MCF 10A (cell line): ENCODE measurements at regions of chr19 and their contacts with region 1.

Region 1: GRCh38 chr19:49200238-49200862 is 42.8 kb downstream of the TRPM4 start:
- DNase-seq: peak; percentile 24
- H3K4me3 Mint-ChIP-seq: no peak overlapping the region
- H3K27ac Mint-ChIP-seq: no peak overlapping the region
- H3K4me1 Mint-ChIP-seq: no peaks in the 10 kb centered on the region
- H3K27me3 Mint-ChIP-seq: no peaks in the 10 kb centered on the region
- CTCF ChIP-seq: no peak

Region 2: DNA sequence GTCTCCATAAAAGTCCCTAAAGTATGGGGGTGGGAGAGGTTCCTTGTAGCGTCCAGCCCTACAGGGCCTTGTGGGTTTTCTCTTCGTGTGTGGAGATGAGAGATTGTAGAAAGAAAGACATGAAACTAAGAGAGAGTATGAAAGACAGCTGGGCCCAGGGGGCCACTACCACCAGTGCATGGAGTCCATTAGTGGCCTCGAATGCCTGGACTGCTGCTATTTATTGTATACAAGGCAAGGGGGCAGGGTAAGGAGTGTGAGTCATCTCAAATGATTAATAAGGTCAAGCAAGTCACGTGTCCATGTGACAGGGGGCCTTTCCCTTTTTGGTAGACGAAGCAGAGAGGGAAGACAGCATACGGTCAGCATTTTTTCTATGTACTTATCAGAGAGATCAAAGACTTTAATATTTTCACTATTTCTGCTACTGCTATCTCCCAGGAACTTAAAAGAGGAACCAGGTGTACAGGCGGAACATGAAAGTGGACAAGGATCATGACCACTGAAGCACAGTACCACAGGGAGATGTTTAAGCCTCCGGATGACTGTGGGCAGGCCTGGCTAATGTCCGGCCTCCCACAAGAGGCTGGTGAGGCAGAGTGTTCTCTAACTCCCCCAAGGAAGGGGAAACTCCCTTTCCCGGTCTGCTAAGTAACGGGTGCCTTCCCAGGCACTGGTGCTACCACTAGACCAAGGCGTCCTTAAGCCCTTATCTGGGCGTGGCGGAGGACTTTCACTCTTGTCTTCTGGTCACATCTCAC is 419.5 kb before region 1 on chr19:
- CTCF ChIA-PET with region 1: no interaction called
- POLR2A ChIA-PET with region 1: no interaction called
- intact Hi-C with region 1: loop called (anchors 10 kb)
- DNase-seq: peak; percentile 46
- H3K4me3 Mint-ChIP-seq: no peak overlapping the region
- H3K27ac Mint-ChIP-seq: peak overlapping the region; percentile 11
- H3K4me1 Mint-ChIP-seq: peaks cover 8% of the 10 kb centered on the region
- H3K27me3 Mint-ChIP-seq: no peaks in the 10 kb centered on the region
- CTCF ChIP-seq: no peak

Region 3: DNA sequence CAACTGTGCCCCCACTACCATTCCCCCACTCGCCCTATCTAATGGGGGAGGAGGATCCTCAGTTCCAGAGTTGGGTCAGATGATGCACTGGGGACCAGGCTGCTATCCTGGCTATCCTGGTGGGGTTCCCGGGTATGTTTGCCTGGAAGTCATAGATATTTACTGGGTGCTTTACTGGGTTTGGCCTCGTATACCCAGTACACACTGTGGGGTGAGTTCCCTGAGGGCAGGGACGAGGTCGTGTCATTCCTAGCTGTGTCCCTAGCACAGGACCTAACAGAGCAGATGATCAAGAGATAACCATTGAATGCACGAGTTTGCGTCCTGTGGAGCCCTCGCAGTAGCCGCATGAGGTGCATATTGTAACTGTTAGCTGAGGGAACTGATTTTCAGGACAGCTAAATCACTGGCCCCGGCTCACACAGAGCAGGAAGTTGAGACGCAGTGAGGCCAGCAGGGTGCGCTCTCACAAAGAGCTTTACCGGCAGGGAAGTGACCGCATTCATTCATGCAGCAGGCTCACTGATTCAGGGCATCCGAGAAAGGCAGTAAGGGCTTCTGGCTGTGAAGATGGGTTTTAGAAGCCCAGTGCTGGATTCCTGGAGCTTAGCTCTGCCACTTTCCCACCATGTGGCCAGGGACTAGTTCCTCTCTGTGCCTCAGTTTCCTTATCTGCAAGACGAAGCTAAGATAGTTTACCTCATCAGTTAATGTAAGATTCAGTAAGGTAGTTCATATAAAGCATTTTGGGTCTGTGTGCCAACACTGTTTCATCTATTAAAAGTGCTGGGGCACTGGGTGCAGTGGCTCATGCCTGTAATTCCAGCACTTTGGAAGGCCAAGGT is 200.6 kb before region 1 on chr19:
- CTCF ChIA-PET with region 1: interaction called, 13 read pairs
- POLR2A ChIA-PET with region 1: no interaction called
- intact Hi-C with region 1: loop called (anchors 5 kb)
- DNase-seq: peak; percentile 69
- H3K4me3 Mint-ChIP-seq: no peak overlapping the region
- H3K27ac Mint-ChIP-seq: no peak overlapping the region
- H3K4me1 Mint-ChIP-seq: peaks cover 9% of the 10 kb centered on the region
- H3K27me3 Mint-ChIP-seq: no peaks in the 10 kb centered on the region
- CTCF ChIP-seq: peak; percentile 81

Region 4: GRCh38 chr19:49097455-49098288 is 102.7 kb before region 1 on chr19:
- CTCF ChIA-PET with region 1: interaction called, 25 read pairs
- POLR2A ChIA-PET with region 1: interaction called, 6 read pairs
- intact Hi-C with region 1: loop called (anchors 1 kb)
- DNase-seq: peak; percentile 87
- H3K4me3 Mint-ChIP-seq: no peak overlapping the region
- H3K27ac Mint-ChIP-seq: no peak overlapping the region
- H3K4me1 Mint-ChIP-seq: peaks cover 5% of the 10 kb centered on the region
- H3K27me3 Mint-ChIP-seq: no peaks in the 10 kb centered on the region
- CTCF ChIP-seq: peak; percentile 96

Region 5: DNA sequence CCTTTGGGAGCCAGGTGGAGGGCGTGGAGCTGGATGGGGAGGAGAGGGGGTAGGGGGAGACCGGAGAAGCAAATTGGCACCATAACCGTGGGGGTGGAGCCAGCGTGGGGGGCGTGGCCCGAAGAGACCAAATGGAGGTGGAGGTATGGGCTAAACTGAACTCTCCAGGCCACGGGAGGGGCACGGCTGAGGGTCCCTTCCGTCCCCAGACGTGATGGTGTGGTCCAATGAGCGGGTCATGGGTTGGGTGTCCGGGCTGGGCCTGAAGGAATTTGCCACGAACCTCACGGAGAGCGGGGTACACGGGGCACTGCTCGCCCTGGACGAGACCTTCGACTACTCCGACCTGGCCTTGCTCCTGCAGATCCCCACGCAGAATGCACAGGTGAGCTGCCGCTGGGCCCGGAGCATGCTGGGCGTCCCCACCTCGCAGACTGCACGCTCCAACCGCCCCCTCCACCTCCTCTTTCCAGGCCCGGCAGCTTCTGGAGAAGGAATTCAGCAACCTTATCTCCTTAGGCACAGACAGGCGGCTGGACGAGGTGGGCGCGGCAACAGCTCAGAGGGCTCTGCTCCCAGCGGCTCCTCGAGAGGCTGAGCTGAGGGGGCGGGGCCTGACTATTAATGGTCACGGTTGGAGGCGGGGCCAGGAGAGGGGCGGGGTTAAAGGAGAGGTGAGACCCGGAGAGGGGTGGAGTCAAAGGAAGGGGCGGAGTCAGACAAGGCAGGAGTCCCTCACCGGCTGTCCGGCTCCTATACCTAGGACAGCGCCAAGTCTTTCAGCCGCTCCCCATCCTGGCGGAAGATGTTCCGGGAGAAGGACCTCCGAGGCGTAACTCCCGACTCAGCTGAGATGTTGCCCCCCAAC is 51.3 kb before region 1 on chr19:
- CTCF ChIA-PET with region 1: interaction called, 14 read pairs
- POLR2A ChIA-PET with region 1: interaction called, 6 read pairs
- intact Hi-C with region 1: loop called (anchors 1 kb)
- DNase-seq: peak; percentile 98
- H3K4me3 Mint-ChIP-seq: peak overlapping the region; percentile 82
- H3K27ac Mint-ChIP-seq: peak overlapping the region; percentile 52
- H3K4me1 Mint-ChIP-seq: peaks cover 17% of the 10 kb centered on the region
- H3K27me3 Mint-ChIP-seq: no peaks in the 10 kb centered on the region
- CTCF ChIP-seq: no peak

Region 6: DNA sequence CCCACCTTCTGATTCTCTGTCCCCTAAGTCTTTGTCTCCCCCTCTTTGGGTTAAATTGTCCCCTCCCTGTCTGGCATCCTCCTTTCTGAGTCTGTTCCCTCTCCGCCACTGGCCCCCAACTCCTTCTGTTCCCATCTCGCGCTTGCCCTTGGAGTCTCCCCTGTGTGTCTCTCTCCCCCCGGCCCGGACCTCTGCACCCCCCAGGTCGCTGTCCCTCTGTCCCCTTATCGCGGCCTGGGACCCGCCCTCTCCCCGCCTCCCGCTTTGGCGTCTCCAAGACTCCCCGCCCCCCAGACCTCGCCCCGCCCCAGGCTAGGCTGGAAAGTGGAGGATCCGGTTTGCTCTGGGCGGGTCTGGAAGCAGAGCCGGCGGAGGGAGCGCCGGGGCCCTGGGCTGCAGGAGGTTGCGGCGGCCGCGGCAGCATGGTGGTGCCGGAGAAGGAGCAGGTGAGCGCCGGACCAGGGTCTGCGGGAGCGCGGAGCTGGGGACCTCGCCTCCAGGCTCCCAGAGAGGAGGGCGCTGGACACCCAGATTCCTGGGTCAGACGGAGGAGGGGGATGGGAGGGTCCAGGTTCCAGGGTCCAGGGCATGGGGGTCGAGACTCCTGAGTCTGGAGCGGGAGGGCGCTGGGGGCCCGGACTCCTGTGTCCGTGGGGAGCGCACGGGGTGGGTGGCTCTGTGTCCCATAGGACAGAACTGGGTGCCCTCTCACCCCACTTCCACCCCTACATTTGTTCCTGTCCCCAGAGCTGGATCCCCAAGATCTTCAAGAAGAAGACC is 42.7 kb before region 1 on chr19 and contains the start of gene TRPM4:
- CTCF ChIA-PET with region 1: interaction called, 7 read pairs
- POLR2A ChIA-PET with region 1: interaction called, 4 read pairs
- intact Hi-C with region 1: loop called (anchors 5 kb)
- DNase-seq: peak; percentile 88
- H3K4me3 Mint-ChIP-seq: peak within 1 kb of the TSS; percentile 82
- H3K27ac Mint-ChIP-seq: peak within 1 kb of the TSS; percentile 36
- H3K4me1 Mint-ChIP-seq: peaks cover 7% of the 10 kb centered on the region
- H3K27me3 Mint-ChIP-seq: no peaks in the 10 kb centered on the region
- CTCF ChIP-seq: no peak
- total RNA-seq, gene TRPM4: 21.2 and 21.4 TPM in 2 replicates

Region 7: GRCh38 chr19:49188626-49189200 is 11.6 kb before region 1 on chr19:
- CTCF ChIA-PET with region 1: interaction called, 12 read pairs
- POLR2A ChIA-PET with region 1: interaction called, 3 read pairs
- intact Hi-C with region 1: no loop called
- DNase-seq: no peak
- H3K4me3 Mint-ChIP-seq: no peak overlapping the region
- H3K27ac Mint-ChIP-seq: no peak overlapping the region
- H3K4me1 Mint-ChIP-seq: no peaks in the 10 kb centered on the region
- H3K27me3 Mint-ChIP-seq: no peaks in the 10 kb centered on the region
- CTCF ChIP-seq: no peak

Region 8: DNA sequence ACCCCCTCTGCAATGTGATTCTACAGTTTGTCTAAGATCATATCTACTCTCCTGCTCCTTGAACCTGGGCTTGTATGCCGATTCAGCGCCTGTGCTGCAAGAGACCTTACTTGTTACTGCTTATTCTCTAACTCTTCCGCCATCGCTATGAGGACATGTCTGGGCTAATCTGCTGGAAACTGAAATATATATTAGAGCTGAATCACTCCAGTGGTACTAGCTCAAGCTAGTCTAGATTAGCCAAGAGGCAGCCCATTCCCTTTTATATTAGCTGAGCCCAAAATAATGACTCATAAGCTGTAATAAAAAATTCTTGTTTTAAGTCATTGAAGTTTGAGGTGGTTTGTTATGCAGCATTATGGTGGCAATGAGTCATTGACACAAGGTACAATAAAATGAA is 71.8 kb after region 1 on chr19:
- CTCF ChIA-PET with region 1: no interaction called
- POLR2A ChIA-PET with region 1: no interaction called
- intact Hi-C with region 1: no loop called
- DNase-seq: peak; percentile 92
- H3K4me3 Mint-ChIP-seq: peak overlapping the region; percentile 7
- H3K27ac Mint-ChIP-seq: peak overlapping the region; percentile 90
- H3K4me1 Mint-ChIP-seq: peaks cover 13% of the 10 kb centered on the region
- H3K27me3 Mint-ChIP-seq: no peaks in the 10 kb centered on the region
- CTCF ChIP-seq: no peak